ENCODE measurements at regions of chr3 and their contacts with region 1.

Region 1: DNA sequence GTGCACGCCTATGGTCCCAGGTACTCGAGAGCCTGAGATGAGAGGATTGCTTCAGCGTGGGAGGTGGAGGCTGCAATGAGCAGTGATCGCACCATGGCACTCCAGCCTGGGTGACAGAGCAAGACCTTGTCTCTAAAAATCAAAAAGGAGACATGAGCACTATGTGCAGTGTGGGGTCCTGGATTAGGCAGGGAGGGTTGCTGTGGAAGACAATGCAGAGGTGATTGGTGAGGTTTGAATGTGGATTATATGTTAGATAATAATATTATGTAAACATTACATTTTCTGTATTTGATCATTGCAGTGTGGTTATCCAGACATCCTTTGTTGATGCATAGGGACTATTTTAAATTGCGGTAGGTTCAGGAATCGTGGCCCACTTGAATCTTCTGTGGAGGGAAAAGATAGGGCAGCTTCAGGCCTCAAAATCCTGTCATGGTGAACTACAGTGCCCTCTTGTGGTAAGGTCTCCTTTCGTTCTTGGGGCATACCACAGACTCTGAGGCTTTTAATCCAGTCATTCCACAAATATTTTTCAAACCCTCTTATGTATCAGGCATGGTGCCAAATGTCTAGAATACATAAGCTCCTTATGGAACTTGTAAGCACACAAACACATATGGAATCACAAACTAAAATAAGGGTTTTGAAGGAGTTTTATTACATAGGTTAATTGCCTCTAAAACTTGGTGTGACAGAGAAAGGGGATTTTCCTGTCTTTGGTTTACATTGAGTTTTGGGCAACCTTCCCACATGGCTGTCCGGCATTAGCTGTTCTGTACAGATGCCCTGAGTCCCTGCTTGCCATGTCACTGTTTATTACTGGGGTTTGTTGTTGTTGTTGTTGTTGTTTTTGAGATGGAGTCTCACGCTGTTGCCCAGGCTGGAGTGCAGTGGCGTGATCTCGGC is 37.7 kb downstream of the GPD1L start:
- DNase-seq: peak; percentile 89
- H3K4me3 Mint-ChIP-seq: no peak overlapping the region
- H3K27ac Mint-ChIP-seq: no peak overlapping the region
- H3K4me1 Mint-ChIP-seq: peaks cover 6% of the 10 kb centered on the region
- H3K27me3 Mint-ChIP-seq: no peaks in the 10 kb centered on the region
- CTCF ChIP-seq: peak; percentile 57

Region 2: DNA sequence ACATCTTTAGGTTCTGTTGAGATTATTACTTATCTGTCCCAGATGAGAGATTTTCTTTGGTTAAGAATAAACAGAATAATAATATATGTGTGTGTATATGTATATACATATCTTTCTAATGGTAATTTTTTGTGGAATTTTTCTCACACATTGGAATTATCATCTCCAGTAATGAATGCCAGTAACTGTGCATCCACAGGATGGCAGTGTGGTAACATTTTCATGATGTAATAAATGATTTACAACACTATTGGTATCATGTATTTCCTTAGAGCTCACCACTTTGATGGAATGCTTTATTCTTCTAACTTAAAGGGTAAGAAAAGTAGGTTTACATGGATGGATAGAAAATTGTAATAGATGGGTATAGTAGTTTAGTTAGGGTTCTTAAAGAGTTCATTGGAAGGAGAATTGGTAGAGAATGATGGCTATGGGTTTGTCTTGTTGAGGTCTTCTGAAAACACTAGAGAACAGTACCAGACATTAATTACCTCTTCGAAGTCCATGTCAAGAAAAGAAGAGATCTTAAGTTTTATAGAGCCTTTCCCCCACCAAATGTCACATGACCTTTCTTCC is 533.3 kb before region 1 on chr3:
- CTCF ChIA-PET with region 1: interaction called, 5 read pairs
- POLR2A ChIA-PET with region 1: no interaction called
- intact Hi-C with region 1: loop called (anchors 1 kb)
- DNase-seq: peak; percentile 56
- H3K4me3 Mint-ChIP-seq: no peak overlapping the region
- H3K27ac Mint-ChIP-seq: no peak overlapping the region
- H3K4me1 Mint-ChIP-seq: peaks cover 25% of the 10 kb centered on the region
- H3K27me3 Mint-ChIP-seq: no peaks in the 10 kb centered on the region
- CTCF ChIP-seq: peak; percentile 50

Region 3: DNA sequence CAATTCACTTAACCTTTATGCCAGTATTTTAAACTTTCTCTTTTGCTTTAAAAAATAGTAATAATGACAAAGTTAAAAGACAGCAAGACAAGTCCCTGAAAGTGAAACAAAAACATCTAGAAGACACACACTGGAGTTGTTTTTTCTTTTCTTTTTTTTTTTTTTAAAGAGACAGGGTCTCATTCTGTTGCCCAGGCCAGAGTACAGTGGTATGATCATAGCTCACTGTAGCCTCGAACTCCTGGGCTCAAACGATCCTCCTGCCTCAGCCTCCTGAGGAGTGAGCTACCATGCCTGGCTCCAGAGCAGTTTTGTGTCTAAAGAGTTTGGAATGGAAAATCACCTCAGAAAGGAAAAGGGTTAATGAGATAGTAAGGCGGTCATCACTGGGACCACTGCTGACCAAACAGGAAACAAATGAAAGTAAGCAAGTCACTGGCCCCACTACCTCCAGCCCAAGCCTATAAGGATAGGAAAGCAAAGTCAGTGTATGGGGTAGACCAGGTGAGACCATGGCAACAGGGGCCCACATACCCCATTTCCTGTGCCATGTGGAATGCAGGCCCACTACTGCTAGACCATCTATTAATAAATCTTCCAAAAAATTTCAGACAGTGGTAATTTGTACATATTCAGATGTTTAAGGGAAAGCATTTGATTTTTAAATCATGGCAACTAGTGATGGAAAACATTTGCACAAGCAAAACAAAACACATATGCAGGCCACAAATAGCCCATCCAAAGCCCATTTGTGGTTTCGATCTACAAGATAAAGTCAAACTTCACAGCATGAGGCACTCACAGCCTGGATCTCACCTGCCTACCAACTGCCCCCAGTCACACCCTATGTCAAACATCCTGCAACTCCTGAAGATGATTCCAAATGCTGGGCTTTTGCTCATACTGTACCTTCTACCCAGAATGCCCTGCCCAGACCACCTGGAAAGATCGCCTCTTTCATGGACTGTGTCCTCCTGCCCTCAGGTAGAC is 225.6 kb before region 1 on chr3:
- CTCF ChIA-PET with region 1: no interaction called
- POLR2A ChIA-PET with region 1: no interaction called
- intact Hi-C with region 1: no loop called
- DNase-seq: no peak
- H3K4me3 Mint-ChIP-seq: peak overlapping the region; percentile 43
- H3K27ac Mint-ChIP-seq: peak overlapping the region; percentile 78
- H3K4me1 Mint-ChIP-seq: peaks cover 55% of the 10 kb centered on the region
- H3K27me3 Mint-ChIP-seq: no peaks in the 10 kb centered on the region
- CTCF ChIP-seq: no peak

Region 4: DNA sequence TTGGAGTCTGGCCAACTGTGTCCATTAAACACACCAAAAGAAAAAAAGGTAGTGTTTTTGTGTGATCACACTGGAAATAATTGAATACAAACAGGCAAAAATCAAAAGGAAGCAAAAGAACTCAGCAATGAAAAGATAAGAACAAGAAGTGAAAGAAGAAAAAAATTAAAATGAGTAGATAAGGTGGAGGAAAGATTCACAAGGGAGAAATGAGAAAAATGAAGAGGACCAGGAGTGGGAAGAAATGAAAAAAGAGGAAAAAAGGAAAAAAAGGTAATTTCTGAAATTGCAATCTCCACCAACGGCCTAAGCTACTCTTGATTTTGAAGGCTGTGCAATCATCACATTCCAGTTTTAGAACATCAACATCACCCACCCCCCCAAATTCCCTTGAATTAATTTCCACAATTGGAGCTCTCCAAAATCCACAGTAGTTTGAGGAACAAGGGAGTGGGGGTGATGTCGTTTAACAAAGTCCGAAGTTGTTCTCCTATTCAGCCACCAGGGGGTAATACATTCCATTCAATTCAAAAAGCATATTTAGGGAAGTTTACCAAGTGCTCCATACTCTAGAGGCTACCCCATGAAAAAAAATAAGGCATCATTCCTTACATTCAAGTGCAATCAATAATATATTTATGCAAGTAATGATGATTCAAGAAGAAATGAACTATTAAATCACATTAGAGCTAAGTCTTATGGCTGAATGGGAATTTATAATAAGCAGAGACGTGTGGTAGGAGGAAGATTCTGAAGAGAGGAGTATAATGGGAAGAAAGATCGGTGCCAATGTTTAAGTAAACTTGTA is 125.1 kb before region 1 on chr3:
- CTCF ChIA-PET with region 1: interaction called, 65 read pairs
- POLR2A ChIA-PET with region 1: interaction called, 6 read pairs
- intact Hi-C with region 1: loop called (anchors 1 kb)
- DNase-seq: peak; percentile 62
- H3K4me3 Mint-ChIP-seq: no peak overlapping the region
- H3K27ac Mint-ChIP-seq: no peak overlapping the region
- H3K4me1 Mint-ChIP-seq: no peaks in the 10 kb centered on the region
- H3K27me3 Mint-ChIP-seq: no peaks in the 10 kb centered on the region
- CTCF ChIP-seq: peak; percentile 62

Region 5: GRCh38 chr3:32106280-32106928 is 37.7 kb before region 1 on chr3 and contains the start of gene GPD1L:
- CTCF ChIA-PET with region 1: interaction called, 10 read pairs
- POLR2A ChIA-PET with region 1: interaction called, 3 read pairs
- intact Hi-C with region 1: no loop called
- DNase-seq: peak; percentile 95
- H3K4me3 Mint-ChIP-seq: peak within 1 kb of the TSS; percentile 77
- H3K27ac Mint-ChIP-seq: peak within 1 kb of the TSS; percentile 16
- H3K4me1 Mint-ChIP-seq: peaks cover 14% of the 10 kb centered on the region
- H3K27me3 Mint-ChIP-seq: no peaks in the 10 kb centered on the region
- CTCF ChIP-seq: no peak
- total RNA-seq, gene GPD1L: 8.5 and 9.7 TPM in 2 replicates

Region 6: DNA sequence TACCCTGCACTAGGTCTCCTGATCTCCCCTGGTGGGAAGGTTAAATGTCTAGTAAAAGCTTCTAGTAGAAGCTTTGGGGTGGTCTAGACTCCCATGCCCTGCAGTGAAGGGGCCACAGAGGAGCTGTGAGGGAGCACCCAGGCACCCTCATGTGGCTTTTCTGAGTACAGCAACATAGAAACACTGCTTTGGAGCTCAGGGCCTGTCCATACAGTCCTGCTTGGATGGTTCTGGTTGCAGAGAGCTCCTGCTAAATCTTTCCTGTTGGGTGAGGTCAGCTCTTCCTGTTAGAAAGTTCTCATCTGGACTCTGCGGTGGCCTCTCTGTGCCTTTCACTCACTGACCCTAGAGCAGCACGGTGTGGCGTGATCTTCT is 10.1 kb after region 1 on chr3:
- CTCF ChIA-PET with region 1: interaction called, 26 read pairs
- POLR2A ChIA-PET with region 1: no interaction called
- intact Hi-C with region 1: no loop called
- DNase-seq: no peak
- H3K4me3 Mint-ChIP-seq: no peak overlapping the region
- H3K27ac Mint-ChIP-seq: no peak overlapping the region
- H3K4me1 Mint-ChIP-seq: no peaks in the 10 kb centered on the region
- H3K27me3 Mint-ChIP-seq: no peaks in the 10 kb centered on the region
- CTCF ChIP-seq: no peak